ENCODE measurements at regions of chr18 and their contacts with region 1.

Region 1: DNA sequence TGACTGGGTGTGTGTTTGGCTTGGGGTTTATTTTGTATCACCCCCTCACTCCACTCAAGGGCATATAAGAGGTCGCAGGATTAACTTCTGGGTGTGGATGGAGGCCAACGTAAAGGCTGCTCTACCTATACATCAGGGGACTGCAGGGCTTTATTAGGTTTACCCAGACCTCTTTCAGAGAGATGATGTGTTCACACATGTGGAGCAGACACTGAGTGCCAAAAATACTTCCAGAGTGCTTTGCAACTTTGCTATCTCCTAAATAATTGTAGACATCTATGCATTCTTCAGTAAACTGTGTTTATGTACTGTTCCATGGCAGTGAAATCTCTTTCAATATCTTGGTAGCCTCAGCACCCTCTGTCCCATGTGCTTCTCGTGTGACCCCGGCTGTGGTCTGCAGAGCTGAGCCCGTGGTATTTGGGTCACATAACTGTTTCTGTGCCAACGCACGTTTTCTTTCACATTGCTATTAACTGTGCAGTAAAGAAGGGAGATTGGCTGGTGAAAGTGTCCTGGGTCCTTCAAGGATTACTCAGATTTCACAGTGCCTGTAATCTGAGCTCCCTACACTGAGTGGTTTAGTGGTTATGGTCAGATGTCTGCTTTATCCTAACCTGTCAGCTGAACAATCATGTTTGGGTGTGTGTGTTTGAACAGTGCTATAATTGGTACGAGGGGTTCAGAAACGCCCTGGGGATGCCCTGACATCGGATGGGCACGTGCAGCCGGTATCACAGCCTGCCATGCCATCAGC is 208.1 kb downstream of the VAPA start:
- DNase-seq: no peak
- ATAC-seq: peak; percentile 80 to 92

Region 2: DNA sequence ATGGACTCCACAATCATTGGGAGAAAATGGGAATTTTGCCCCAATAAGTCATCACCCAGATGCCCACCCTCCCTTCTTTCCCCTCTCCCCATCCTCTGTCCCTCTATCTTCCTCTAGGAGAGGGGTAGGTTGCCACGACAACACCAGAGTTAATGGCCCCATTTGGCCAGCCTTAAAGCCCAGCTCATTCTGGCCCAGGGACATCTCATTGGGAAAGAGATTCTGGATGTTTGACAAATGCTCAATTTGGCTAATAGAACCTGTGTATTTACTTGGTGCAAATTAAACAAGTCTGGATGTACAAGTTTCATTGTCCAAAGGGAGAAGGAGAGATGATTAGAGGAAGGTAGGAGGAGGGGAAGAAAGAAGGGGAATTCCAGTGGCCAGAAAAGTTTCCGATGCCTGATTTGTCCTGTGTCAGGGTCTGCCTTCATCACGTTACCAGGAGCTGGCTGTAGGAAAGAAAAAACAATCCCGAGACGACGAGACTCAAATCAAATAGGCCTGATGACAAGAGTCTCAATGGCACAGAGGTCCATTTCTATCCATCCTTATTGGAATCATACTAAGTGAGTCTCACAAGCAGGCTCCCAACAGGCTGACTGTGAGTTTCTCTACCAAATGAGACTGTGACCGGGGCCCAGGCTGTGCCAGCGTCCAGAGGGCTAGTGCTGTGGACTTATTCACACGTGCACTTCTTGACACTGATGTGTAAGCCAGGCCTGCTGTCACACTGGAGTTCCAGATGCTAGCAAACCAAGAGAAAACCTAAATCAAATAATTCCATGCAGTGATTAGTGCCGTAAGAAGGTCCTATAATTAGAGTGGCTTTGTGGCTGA is 67.2 kb after region 1 on chr18:
- intact Hi-C with region 1: loop called in 1 of 2 experiments (anchors 10 kb)
- DNase-seq: no peak
- ATAC-seq: peak; percentile 54 to 80

Measured in left cardiac atrium (tissue), 4 donors.